Dorsolateral prefrontal cortex (tissue), 120 donors: ENCODE measurements at regions of chr21 and their contacts with region 1.

Region 1: DNA sequence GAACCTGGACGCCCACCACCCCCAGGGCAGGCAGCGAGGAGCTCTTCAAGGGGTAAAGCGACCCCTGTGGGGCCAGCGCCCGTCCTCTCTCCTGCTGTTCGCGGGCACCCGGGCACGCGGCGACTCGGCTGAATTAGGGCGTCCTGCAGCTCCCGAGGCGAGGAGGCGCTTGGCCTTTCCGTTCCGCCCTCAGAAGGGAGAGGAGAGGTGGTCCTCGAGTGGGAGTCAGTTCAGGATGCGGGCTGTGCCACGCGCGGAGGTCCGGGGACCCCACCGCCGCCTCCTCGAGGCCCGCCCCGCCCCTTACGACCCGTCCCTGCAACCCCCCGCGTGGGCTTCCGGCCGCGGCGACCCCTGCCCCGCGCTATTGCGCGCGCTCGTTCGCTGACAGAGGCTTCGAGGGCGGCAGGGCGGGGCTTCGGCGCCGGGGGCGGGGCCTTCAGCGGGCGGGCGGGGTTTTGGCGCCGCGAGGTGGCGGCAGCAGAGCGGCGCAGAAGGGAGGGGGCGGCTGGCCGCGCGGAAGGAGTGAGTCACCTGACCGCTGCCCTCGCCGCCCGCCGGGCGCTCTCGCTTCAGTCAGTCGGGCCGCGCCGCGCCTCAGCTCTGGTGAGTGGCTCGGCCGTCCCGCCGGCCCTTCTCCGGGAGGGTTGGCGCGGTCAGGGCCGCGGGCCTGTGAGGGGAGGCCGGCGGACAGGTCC is at the start of gene BACH1:
- DNase-seq: peak; percentile 65 to 91 (median 82)
- H3K4me3 ChIP-seq: peak within 1 kb of the TSS; percentile 48 to 90 (median 77)
- H3K27ac ChIP-seq: peak within 1 kb of the TSS in 57 of 59 donors; percentile 24 to 93 (median 82)
- H3K27me3 ChIP-seq: no peaks in the 10 kb centered on the region
- CTCF ChIP-seq: peak in 53 of 56 donors; percentile 29 to 75 (median 54)
- total RNA-seq, gene BACH1: 39.9 to 77.7 (median 54.2) TPM

Region 2: DNA sequence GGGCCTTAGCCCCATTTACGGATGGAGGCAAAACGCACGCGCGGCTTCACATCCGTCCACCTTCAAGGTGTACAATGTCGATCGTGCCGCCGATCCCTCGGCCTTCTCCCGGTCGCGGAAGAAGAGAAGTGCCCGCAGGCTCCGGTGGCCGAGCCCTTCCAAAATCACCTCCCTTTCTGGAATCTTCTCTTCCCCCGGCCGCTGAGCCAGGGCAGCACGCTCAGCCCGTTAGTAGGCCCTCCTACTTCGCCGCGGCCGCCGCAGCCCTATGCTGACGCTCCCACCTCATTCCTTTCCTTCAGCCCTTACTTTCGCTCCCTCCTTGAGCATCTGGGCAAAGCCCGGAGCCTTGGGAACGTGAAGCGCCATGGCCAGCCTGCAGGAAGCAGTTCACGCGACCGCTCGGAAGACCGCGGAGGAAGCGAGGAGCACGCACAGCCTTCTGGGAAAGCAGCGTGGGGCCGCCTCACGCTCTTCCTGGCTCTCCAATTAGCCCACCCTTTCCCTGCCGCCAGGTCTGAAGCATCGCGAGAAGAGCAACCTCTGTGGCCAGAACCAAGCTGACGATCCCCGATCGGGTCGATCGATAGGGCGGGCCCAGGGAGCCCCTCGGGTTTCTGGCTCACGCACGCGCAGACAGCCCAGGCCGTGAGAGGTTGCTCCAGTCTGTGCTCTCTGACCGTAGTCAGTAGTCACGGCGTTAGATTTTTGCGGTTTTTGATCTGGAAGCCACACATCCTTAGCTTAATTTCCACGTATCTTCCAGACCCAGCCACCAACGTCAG is 225.1 kb before region 1 on chr21 and contains the start of gene CCT8:
- intact Hi-C with region 1: loop called in 1 of 2 experiments (anchors 5 kb)
- DNase-seq: peak; percentile 95 to 99 (median 98)
- H3K4me3 ChIP-seq: peak within 1 kb of the TSS; percentile 69 to 100 (median 91)
- H3K27ac ChIP-seq: peak within 1 kb of the TSS; percentile 54 to 99 (median 92)
- H3K27me3 ChIP-seq: no peaks in the 10 kb centered on the region
- CTCF ChIP-seq: peak in 35 of 56 donors; percentile 6 to 55 (median 29)
- total RNA-seq, gene CCT8: 53.0 to 139 (median 101) TPM

Region 3: DNA sequence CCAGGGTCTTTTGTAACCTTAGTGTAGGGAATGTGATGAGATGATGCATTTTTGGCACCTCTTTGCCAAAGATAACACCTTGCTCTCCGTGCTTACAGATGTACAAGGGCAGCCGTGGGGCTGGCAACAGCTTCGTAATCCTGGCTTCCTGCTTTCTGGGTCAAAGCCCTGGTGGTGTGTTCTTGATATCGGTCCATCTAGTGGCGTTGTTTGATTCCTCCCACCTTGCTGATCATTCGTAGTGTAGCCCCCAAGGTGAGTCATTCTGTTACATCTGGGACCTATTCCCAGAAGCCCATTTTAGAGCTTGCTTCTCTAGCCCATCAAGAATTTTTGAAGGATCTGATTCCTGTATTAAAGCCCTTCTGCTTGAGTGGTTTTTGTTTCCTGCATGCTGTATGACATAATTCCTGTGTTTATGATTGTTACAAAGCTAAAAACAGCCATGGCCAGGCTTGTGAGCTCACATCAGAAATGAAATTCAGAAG is 218.0 kb before region 1 on chr21:
- intact Hi-C with region 1: loop called in 1 of 2 experiments (anchors 5 kb)
- DNase-seq: no peak
- H3K4me3 ChIP-seq: peak overlapping the region in 1 of 59 donors; percentile 8
- H3K27ac ChIP-seq: peak overlapping the region in 23 of 59 donors; percentile 0 to 89 (median 25)
- H3K27me3 ChIP-seq: no peaks in the 10 kb centered on the region
- CTCF ChIP-seq: no peak

Region 4: DNA sequence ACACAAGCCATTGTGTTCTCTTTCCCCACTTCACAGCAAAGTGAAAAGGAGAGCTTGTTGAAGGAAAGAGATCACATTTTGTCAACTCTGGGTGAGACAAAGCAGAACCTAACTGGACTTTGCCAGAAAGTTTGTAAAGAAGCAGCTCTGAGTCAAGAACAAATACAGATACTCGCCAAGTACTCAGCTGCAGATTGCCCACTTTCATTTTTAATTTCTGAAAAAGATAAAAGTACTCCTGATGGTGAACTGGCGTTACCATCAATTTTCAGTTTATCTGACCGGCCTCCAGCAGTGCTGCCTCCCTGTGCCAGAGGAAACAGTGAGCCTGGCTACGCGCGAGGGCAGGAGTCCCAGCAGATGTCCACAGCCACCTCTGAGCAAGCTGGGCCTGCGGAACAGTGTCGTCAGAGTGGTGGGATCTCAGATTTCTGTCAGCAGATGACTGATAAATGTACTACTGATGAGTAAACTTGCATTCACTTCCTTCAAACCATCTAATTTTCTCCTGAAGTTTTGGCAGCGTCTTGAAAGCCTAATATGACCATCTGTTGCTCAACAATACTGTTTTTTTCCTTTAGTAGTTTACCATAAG is 44.0 kb after region 1 on chr21:
- intact Hi-C with region 1: loop called in 1 of 2 experiments (anchors 10 kb)
- DNase-seq: peak in 1 of 10 donors; percentile 55
- H3K4me3 ChIP-seq: peak overlapping the region in 4 of 59 donors; percentile 4 to 18 (median 10)
- H3K27ac ChIP-seq: peak overlapping the region in 25 of 59 donors; percentile 4 to 66 (median 38)
- H3K27me3 ChIP-seq: no peaks in the 10 kb centered on the region
- CTCF ChIP-seq: peak in 2 of 56 donors; percentile 9 to 17

Region 5: DNA sequence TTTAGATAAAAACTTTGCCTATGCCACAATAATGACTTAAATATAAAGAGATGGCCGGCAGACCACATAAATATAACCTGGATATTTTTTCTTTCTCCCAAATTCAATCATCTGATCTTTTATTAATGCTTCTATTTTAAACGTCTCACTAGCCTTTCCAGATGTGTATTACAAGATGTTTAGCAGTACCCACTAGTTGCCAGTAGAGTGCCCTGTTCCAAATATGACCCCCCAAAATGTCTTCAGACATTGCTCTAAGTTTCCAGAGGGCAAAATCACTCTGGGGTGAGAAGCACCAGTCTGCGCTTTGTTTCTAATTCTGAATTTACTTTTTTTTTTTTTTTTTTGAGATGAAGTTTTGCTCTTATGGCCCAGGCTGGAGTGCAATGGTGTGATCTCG is 373.2 kb after region 1 on chr21:
- intact Hi-C with region 1: no loop called
- DNase-seq: no peak
- H3K4me3 ChIP-seq: no peak overlapping the region
- H3K27ac ChIP-seq: no peak overlapping the region
- H3K27me3 ChIP-seq: no peaks in the 10 kb centered on the region
- CTCF ChIP-seq: peak in 2 of 56 donors; percentile 9 to 14